Gastrocnemius medialis (tissue), 4 donors: ENCODE measurements at regions of chr7 and their contacts with region 1.

Region 1: GRCh38 chr7:137871170-137871915 is 24.6 kb upstream of the DGKI start:
- DNase-seq: peak; percentile 79 to 87
- ATAC-seq: peak; percentile 95
- H3K4me3 ChIP-seq: peak overlapping the region in 2 of 4 donors; percentile 6 to 32
- H3K27ac ChIP-seq: peak overlapping the region; percentile 88 to 91 (median 90)
- H3K4me1 ChIP-seq: peaks cover 31 to 51% of the 10 kb centered on the region in 2 donors
- H3K27me3 ChIP-seq: no peaks in the 10 kb centered on the region
- CTCF ChIP-seq: no peak
- POLR2A ChIP-seq: peak; percentile 58 to 78

Region 2: DNA sequence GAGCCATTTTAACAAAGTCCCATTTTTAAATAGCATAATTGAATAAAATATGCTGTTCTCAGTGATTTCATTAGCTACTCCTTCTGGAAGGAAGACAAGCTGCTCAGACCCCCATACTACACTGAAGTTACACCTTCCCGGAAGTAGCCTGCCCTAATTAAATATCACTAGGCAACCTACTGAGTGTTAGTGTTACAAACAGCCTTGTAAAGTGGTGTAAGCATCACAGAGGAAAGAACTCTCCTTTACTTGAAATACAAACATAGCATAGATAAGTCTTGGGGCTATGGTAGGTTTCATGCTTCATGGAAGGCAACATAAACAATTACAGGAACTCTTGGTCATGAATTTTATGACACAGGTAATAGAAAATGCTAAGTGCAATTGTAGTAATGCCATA is 484.4 kb before region 1 on chr7:
- in situ Hi-C with region 1: no loop called
- intact Hi-C with region 1: no loop called
- DNase-seq: no peak
- ATAC-seq: no peak
- H3K4me3 ChIP-seq: no peak overlapping the region
- H3K27ac ChIP-seq: no peak overlapping the region
- H3K4me1 ChIP-seq: no peaks in the 10 kb centered on the region
- H3K27me3 ChIP-seq: no peaks in the 10 kb centered on the region
- CTCF ChIP-seq: no peak
- POLR2A ChIP-seq: no peak

Region 3: GRCh38 chr7:137681657-137682562 is 189.4 kb before region 1 on chr7:
- in situ Hi-C with region 1: no loop called
- intact Hi-C with region 1: no loop called
- DNase-seq: no peak
- ATAC-seq: no peak
- H3K4me3 ChIP-seq: no peak overlapping the region
- H3K27ac ChIP-seq: no peak overlapping the region
- H3K4me1 ChIP-seq: no peaks in the 10 kb centered on the region
- H3K27me3 ChIP-seq: no peaks in the 10 kb centered on the region
- CTCF ChIP-seq: no peak
- POLR2A ChIP-seq: no peak

Region 4: GRCh38 chr7:137890449-137890921 is 19.1 kb after region 1 on chr7:
- in situ Hi-C with region 1: no loop called
- intact Hi-C with region 1: loop called (anchors 1 kb)
- DNase-seq: peak; percentile 85 to 90
- ATAC-seq: peak; percentile 99
- H3K4me3 ChIP-seq: no peak overlapping the region
- H3K27ac ChIP-seq: peak overlapping the region; percentile 79 to 90 (median 84)
- H3K4me1 ChIP-seq: peaks cover 13 to 34% of the 10 kb centered on the region in 2 donors
- H3K27me3 ChIP-seq: no peaks in the 10 kb centered on the region
- CTCF ChIP-seq: no peak
- POLR2A ChIP-seq: peak; percentile 42 to 73

Region 5: DNA sequence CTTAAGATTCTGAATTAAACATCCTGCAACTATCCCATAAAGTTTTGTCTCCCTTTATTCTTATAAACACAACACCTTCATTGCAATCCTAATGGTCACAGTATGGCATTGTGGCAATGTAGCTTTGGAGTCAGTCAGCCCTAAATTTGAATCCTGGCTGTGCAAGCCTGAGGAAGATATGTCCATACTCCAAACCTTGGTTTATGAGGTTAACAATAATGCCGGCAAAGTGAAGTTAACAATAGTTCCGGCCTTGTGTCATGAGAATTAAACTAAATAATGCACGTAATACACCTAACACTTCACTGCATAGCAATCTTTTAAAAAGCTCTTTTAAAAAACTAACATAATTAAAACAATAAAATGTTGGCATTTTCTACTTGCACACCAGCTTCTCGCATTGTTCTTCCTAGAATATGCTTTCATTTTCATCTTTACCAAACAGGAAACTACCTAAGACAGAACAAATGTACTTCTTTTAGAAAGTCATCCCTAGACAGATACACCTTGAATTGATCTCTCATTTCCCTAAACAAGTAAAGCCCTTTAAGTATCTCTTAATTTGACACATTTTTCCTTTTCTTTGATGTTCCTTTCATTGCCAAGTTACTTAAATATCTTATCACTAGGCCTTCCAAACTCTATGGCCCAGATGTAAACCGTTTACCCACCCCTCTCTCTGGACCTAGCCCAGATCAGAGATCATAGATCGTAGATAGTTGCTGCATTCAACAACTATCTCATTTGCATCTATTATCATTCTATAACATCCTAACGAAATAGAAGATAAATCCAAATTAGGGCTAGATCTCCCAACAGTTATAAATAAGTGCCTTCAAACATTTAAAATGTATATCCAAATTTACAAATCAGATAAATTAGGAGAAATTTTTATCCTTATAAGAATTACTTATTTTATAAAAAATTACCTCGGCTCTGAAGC is 63.9 kb after region 1 on chr7:
- in situ Hi-C with region 1: no loop called
- intact Hi-C with region 1: no loop called
- DNase-seq: no peak
- ATAC-seq: no peak
- H3K4me3 ChIP-seq: no peak overlapping the region
- H3K27ac ChIP-seq: peak overlapping the region in 2 of 4 donors; percentile 6 to 81
- H3K4me1 ChIP-seq: peaks cover 52% of the 10 kb centered on the region in 2 donors
- H3K27me3 ChIP-seq: no peaks in the 10 kb centered on the region
- CTCF ChIP-seq: no peak
- POLR2A ChIP-seq: no peak

Region 6: GRCh38 chr7:138962550-138963241 is 1091.4 kb after region 1 on chr7:
- in situ Hi-C with region 1: no loop called
- intact Hi-C with region 1: no loop called
- DNase-seq: no peak
- ATAC-seq: no peak
- H3K4me3 ChIP-seq: no peak overlapping the region
- H3K27ac ChIP-seq: no peak overlapping the region
- H3K4me1 ChIP-seq: no peaks in the 10 kb centered on the region
- H3K27me3 ChIP-seq: no peaks in the 10 kb centered on the region
- CTCF ChIP-seq: no peak
- POLR2A ChIP-seq: no peak